ENCODE measurements at regions of chr17 and their contacts with region 1.

Region 1: GRCh38 chr17:76005263-76006149 is 4.9 kb downstream of the CDK3 start:
- DNase-seq: peak; percentile 55 to 82
- H3K4me3 ChIP-seq: no peak overlapping the region
- H3K27ac ChIP-seq: no peak overlapping the region
- H3K4me1 ChIP-seq: no peaks in the 10 kb centered on the region; the same call in 1 of the 2 replicates
- H3K27me3 ChIP-seq: no peaks in the 10 kb centered on the region
- CTCF ChIP-seq: peak; percentile 93

Region 2: GRCh38 chr17:75855310-75856081 is 150.0 kb before region 1 on chr17 and contains the start of gene WBP2:
- CTCF ChIA-PET with region 1: no interaction called
- POLR2A ChIA-PET with region 1: no interaction called
- intact Hi-C with region 1: no loop called
- DNase-seq: peak; percentile 96 to 100
- H3K4me3 ChIP-seq: peak within 1 kb of the TSS; percentile 74
- H3K27ac ChIP-seq: peak within 1 kb of the TSS; percentile 79
- H3K4me1 ChIP-seq: peaks cover 23% of the 10 kb centered on the region
- H3K27me3 ChIP-seq: no peaks in the 10 kb centered on the region
- CTCF ChIP-seq: peak; percentile 52
- total RNA-seq, gene WBP2: 114 and 159 TPM in 2 replicates

Region 3: GRCh38 chr17:76063875-76064546 is 58.5 kb after region 1 on chr17:
- CTCF ChIA-PET with region 1: interaction called, 13 read pairs
- POLR2A ChIA-PET with region 1: interaction called, 13 read pairs
- intact Hi-C with region 1: no loop called
- DNase-seq: no peak
- H3K4me3 ChIP-seq: no peak overlapping the region
- H3K27ac ChIP-seq: no peak overlapping the region
- H3K4me1 ChIP-seq: no peaks in the 10 kb centered on the region
- H3K27me3 ChIP-seq: no peaks in the 10 kb centered on the region
- CTCF ChIP-seq: no peak

Measured in PC-9 (cell line).